ENCODE measurements at regions of chr2 and their contacts with region 1.

Region 1: GRCh38 chr2:215920244-215921100 is 92.9 kb downstream of the MREG start:
- DNase-seq: peak; percentile 87
- ATAC-seq: peak; percentile 92
- H3K4me3 ChIP-seq: no peak overlapping the region
- H3K27ac ChIP-seq: no peak overlapping the region
- H3K4me1 ChIP-seq: peaks cover 12% of the 10 kb centered on the region
- H3K27me3 ChIP-seq: no peaks in the 10 kb centered on the region
- CTCF ChIP-seq: peak; percentile 95
- POLR2A ChIP-seq: peak; percentile 40; the same call in 1 of the 2 replicates
- RAD21 ChIP-seq: peak; percentile 98

Region 2: GRCh38 chr2:215454519-215455246 is 465.8 kb before region 1 on chr2:
- CTCF ChIA-PET with region 1: interaction called, 3 read pairs
- POLR2A ChIA-PET with region 1: no interaction called
- dilution Hi-C with region 1: no loop called
- in situ Hi-C with region 1: no loop called
- intact Hi-C with region 1: loop called (anchors 1 kb)
- DNase-seq: no peak
- ATAC-seq: peak; percentile 66
- H3K4me3 ChIP-seq: no peak overlapping the region
- H3K27ac ChIP-seq: no peak overlapping the region
- H3K4me1 ChIP-seq: no peaks in the 10 kb centered on the region
- H3K27me3 ChIP-seq: no peaks in the 10 kb centered on the region
- CTCF ChIP-seq: peak; percentile 75
- POLR2A ChIP-seq: no peak
- RAD21 ChIP-seq: peak; percentile 75

Region 3: GRCh38 chr2:215624423-215624829 is 296.0 kb before region 1 on chr2:
- CTCF ChIA-PET with region 1: interaction called, 3 read pairs
- POLR2A ChIA-PET with region 1: no interaction called
- dilution Hi-C with region 1: no loop called
- in situ Hi-C with region 1: no loop called
- intact Hi-C with region 1: loop called (anchors 1 kb)
- DNase-seq: peak; percentile 100
- ATAC-seq: peak; percentile 95
- H3K4me3 ChIP-seq: no peak overlapping the region
- H3K27ac ChIP-seq: peak overlapping the region; percentile 92; the same call in 1 of the 2 replicates
- H3K4me1 ChIP-seq: peaks cover 11% of the 10 kb centered on the region
- H3K27me3 ChIP-seq: no peaks in the 10 kb centered on the region
- CTCF ChIP-seq: no peak
- POLR2A ChIP-seq: 0 out of 2 replicates have a peak, but pooled peaks have one; percentile 10
- RAD21 ChIP-seq: peak; percentile 30

Region 4: DNA sequence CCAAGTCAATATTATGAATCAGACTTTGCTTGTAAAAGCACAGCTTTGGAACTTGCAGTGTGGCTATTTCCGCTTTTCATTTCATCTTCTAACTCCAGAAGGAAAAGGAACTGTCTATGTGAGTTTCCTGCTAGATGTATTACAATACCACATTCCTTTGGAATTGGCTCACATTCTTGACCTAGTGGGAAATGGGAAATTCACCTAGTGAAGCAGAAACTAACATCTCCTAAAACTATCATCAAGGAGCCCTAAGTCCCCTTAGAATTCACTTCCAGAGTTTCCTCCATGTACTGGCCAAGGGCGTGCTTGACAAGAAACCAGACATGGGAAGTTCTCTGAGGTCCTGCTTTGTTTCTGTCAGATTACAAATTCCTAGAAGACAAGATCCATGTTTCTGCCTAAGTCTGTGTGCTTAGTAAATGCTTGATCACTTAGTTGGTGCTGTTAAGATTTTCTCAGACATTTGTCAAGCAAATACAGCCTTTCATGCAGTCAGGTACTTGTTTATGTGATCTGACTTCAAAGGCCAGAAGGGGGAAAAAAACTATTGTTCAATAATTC is 208.9 kb before region 1 on chr2:
- CTCF ChIA-PET with region 1: no interaction called
- POLR2A ChIA-PET with region 1: interaction called, 7 read pairs
- dilution Hi-C with region 1: no loop called
- in situ Hi-C with region 1: no loop called
- intact Hi-C with region 1: loop called (anchors 2 kb)
- DNase-seq: peak; percentile 78
- ATAC-seq: peak; percentile 31; the same call in 1 of the 2 replicates
- H3K4me3 ChIP-seq: no peak overlapping the region
- H3K27ac ChIP-seq: peak overlapping the region; percentile 21; the same call in 1 of the 2 replicates
- H3K4me1 ChIP-seq: peaks cover 26% of the 10 kb centered on the region
- H3K27me3 ChIP-seq: no peaks in the 10 kb centered on the region
- CTCF ChIP-seq: no peak
- POLR2A ChIP-seq: no peak
- RAD21 ChIP-seq: no peak

Region 5: GRCh38 chr2:215828517-215829184 is 91.8 kb before region 1 on chr2:
- CTCF ChIA-PET with region 1: interaction called, 3 read pairs
- POLR2A ChIA-PET with region 1: no interaction called
- dilution Hi-C with region 1: no loop called
- in situ Hi-C with region 1: no loop called
- intact Hi-C with region 1: loop called (anchors 5 kb)
- DNase-seq: peak; percentile 62
- ATAC-seq: peak; percentile 30
- H3K4me3 ChIP-seq: no peak overlapping the region
- H3K27ac ChIP-seq: no peak overlapping the region
- H3K4me1 ChIP-seq: peaks cover 11% of the 10 kb centered on the region
- H3K27me3 ChIP-seq: no peaks in the 10 kb centered on the region
- CTCF ChIP-seq: peak; percentile 58
- POLR2A ChIP-seq: no peak
- RAD21 ChIP-seq: peak; percentile 62

Region 6: GRCh38 chr2:216057688-216058193 is 137.3 kb after region 1 on chr2:
- CTCF ChIA-PET with region 1: no interaction called
- POLR2A ChIA-PET with region 1: no interaction called
- dilution Hi-C with region 1: no loop called
- in situ Hi-C with region 1: no loop called
- intact Hi-C with region 1: no loop called
- DNase-seq: peak; percentile 70
- ATAC-seq: peak; percentile 90
- H3K4me3 ChIP-seq: no peak overlapping the region
- H3K27ac ChIP-seq: no peak overlapping the region
- H3K4me1 ChIP-seq: peaks cover 2% of the 10 kb centered on the region; the same call in 1 of the 2 replicates
- H3K27me3 ChIP-seq: no peaks in the 10 kb centered on the region
- CTCF ChIP-seq: no peak
- POLR2A ChIP-seq: no peak
- RAD21 ChIP-seq: no peak

Measured in IMR-90 (cell line).